CD8-positive, alpha-beta T cell (primary cell): ENCODE measurements at regions of chr11 and their contacts with region 1.

Region 1: DNA sequence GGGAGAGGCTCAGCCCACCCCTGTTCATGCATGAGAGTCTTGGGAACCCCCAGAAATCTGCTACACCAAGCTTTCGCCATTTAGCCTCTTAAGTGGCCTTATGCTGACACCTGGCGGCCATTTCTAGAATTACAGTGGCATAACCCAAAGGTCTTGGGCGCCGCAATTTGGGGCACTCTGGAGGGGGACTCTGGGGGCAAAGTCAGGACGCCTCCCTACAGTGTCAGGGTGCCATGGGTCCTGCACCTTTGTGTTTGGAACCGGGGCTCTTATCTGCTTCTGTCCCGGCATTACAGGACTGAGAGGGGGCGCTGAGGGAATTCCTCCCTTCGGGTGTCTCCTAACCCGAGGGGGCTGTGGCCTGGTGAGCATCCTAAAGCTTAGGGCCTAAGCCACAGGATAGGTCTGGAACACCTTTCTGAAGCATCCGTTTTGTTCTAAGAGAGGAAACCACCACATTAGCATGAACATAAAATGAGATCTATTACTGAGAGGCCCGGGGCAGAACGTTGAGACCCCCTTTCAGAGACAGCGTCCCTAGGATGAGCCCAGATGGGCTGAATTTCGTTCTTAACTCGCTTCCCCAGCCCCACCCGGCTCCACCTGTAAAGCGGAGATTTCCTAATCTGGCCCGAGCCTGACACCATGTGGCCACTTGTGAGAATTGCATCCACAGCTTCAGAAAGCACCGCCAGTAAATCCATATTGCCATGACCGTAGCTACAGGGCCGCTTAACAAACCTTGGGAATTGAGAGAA is 9.3 kb downstream of the INS start:
- DNase-seq: peak; percentile 68 to 88 (median 82)
- ATAC-seq: peak; percentile 90
- H3K4me3 ChIP-seq: peak overlapping the region; percentile 14 to 18
- H3K4me3 Mint-ChIP-seq: peak overlapping the region; percentile 56
- H3K27ac ChIP-seq: peak overlapping the region in 1 of 2 experiments; percentile 45
- H3K27ac Mint-ChIP-seq: no peak overlapping the region
- H3K4me1 ChIP-seq: peaks cover 6% of the 10 kb centered on the region
- H3K4me1 Mint-ChIP-seq: peaks cover 6% of the 10 kb centered on the region
- H3K27me3 ChIP-seq: peaks cover 4 to 5% of the 10 kb centered on the region in 2 experiments
- H3K27me3 Mint-ChIP-seq: peaks cover 30% of the 10 kb centered on the region
- CTCF ChIP-seq: peak; percentile 74

Region 2: GRCh38 chr11:1837171-1838076 is 314.3 kb before region 1 on chr11:
- CTCF ChIA-PET with region 1: interaction called, 60 read pairs
- POLR2A ChIA-PET with region 1: interaction called, 4 read pairs
- intact Hi-C with region 1: loop called in 1 of 2 experiments (anchors 1 kb)
- DNase-seq: peak; percentile 73 to 94 (median 88)
- ATAC-seq: peak; percentile 98
- H3K4me3 ChIP-seq: no peak overlapping the region
- H3K4me3 Mint-ChIP-seq: no peak overlapping the region
- H3K27ac ChIP-seq: no peak overlapping the region
- H3K27ac Mint-ChIP-seq: no peak overlapping the region
- H3K4me1 ChIP-seq: peaks cover 25% of the 10 kb centered on the region
- H3K4me1 Mint-ChIP-seq: peaks cover 10% of the 10 kb centered on the region
- H3K27me3 ChIP-seq: peaks cover 0 to 6% of the 10 kb centered on the region in 2 experiments
- H3K27me3 Mint-ChIP-seq: no peaks in the 10 kb centered on the region
- CTCF ChIP-seq: peak; percentile 84

Region 3: DNA sequence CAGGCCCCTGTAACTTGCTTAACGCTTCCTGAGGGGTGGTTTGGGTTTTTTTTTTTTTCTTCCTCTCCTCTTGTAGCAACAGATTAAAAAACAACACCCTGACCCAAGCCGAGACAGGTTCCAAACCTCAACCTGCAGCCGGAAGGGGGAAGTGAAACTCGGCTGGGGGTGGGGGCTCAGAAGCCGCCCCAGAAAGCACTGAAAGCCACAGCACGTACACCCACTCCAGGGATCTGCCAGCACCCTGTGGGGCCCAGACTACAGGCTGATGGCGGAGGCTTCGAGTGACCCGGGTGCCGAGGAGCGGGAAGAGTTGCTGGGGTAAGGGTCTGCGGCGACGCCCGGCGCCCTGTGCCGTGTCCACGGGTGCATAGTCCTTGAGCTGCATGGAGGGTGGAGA is 298.8 kb before region 1 on chr11 and contains the start of gene LSP1:
- CTCF ChIA-PET with region 1: interaction called, 16 read pairs
- POLR2A ChIA-PET with region 1: no interaction called
- intact Hi-C with region 1: loop called in 1 of 2 experiments (anchors 5 kb)
- DNase-seq: peak; percentile 64 to 96 (median 86)
- ATAC-seq: peak; percentile 65
- H3K4me3 ChIP-seq: peak within 1 kb of the TSS; percentile 81 to 100
- H3K4me3 Mint-ChIP-seq: peak within 1 kb of the TSS; percentile 94
- H3K27ac ChIP-seq: peak within 1 kb of the TSS; percentile 90 to 91
- H3K27ac Mint-ChIP-seq: peak within 1 kb of the TSS; percentile 92
- H3K4me1 ChIP-seq: peaks cover 81% of the 10 kb centered on the region
- H3K4me1 Mint-ChIP-seq: peaks cover 67% of the 10 kb centered on the region
- H3K27me3 ChIP-seq: no peaks in the 10 kb centered on the region
- H3K27me3 Mint-ChIP-seq: no peaks in the 10 kb centered on the region
- CTCF ChIP-seq: no peak
- total RNA-seq, gene LSP1: 190 to 191 TPM

Region 4: GRCh38 chr11:1917671-1918516 is 233.8 kb before region 1 on chr11:
- CTCF ChIA-PET with region 1: interaction called, 3 read pairs
- POLR2A ChIA-PET with region 1: no interaction called
- intact Hi-C with region 1: loop called in 1 of 2 experiments (anchors 10 kb)
- DNase-seq: peak in 2 of 9 experiments; percentile 31 to 44
- ATAC-seq: peak; percentile 54
- H3K4me3 ChIP-seq: no peak overlapping the region
- H3K4me3 Mint-ChIP-seq: no peak overlapping the region
- H3K27ac ChIP-seq: no peak overlapping the region
- H3K27ac Mint-ChIP-seq: no peak overlapping the region
- H3K4me1 ChIP-seq: peaks cover 11% of the 10 kb centered on the region
- H3K4me1 Mint-ChIP-seq: peaks cover 26% of the 10 kb centered on the region
- H3K27me3 ChIP-seq: peaks cover 0 to 2% of the 10 kb centered on the region in 2 experiments
- H3K27me3 Mint-ChIP-seq: peaks cover 11% of the 10 kb centered on the region
- CTCF ChIP-seq: peak; percentile 29

Region 5: DNA sequence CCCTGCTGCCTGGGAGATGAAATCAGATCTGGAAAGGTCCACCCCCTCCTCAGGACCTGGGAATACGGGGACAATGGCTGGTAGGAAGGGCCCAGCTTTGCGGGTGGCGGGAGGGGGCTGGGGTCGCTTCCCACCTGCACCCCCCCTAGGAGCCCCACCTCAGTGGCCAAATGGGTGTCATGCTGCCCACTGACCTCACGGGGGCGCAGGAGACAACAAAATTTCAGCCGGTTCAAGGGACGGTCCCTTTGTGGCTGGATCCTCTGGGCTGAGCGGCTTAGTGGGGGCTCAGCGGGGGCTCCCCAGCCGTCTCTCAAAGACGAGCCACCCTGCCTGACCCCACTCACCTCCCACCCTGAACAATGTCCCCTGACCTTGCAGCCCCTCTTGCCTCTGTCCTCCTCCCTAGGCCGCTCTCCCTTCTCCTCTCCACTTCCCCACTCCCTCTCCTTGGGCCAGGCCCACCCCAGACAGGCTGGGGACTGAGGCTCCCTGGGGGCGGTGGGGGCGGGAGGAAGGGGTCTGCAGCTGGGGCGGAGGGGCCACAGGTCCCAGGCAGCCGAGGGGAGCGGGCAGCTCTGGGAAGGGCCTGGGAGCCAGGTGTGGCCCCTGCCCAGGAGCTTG is 114.7 kb before region 1 on chr11:
- CTCF ChIA-PET with region 1: interaction called, 343 read pairs
- POLR2A ChIA-PET with region 1: interaction called, 4 read pairs
- intact Hi-C with region 1: no loop called
- DNase-seq: no peak
- ATAC-seq: peak; percentile 54
- H3K4me3 ChIP-seq: no peak overlapping the region
- H3K4me3 Mint-ChIP-seq: no peak overlapping the region
- H3K27ac ChIP-seq: no peak overlapping the region
- H3K27ac Mint-ChIP-seq: no peak overlapping the region
- H3K4me1 ChIP-seq: no peaks in the 10 kb centered on the region
- H3K4me1 Mint-ChIP-seq: no peaks in the 10 kb centered on the region
- H3K27me3 ChIP-seq: no peaks in the 10 kb centered on the region
- H3K27me3 Mint-ChIP-seq: no peaks in the 10 kb centered on the region
- CTCF ChIP-seq: no peak

Region 6: DNA sequence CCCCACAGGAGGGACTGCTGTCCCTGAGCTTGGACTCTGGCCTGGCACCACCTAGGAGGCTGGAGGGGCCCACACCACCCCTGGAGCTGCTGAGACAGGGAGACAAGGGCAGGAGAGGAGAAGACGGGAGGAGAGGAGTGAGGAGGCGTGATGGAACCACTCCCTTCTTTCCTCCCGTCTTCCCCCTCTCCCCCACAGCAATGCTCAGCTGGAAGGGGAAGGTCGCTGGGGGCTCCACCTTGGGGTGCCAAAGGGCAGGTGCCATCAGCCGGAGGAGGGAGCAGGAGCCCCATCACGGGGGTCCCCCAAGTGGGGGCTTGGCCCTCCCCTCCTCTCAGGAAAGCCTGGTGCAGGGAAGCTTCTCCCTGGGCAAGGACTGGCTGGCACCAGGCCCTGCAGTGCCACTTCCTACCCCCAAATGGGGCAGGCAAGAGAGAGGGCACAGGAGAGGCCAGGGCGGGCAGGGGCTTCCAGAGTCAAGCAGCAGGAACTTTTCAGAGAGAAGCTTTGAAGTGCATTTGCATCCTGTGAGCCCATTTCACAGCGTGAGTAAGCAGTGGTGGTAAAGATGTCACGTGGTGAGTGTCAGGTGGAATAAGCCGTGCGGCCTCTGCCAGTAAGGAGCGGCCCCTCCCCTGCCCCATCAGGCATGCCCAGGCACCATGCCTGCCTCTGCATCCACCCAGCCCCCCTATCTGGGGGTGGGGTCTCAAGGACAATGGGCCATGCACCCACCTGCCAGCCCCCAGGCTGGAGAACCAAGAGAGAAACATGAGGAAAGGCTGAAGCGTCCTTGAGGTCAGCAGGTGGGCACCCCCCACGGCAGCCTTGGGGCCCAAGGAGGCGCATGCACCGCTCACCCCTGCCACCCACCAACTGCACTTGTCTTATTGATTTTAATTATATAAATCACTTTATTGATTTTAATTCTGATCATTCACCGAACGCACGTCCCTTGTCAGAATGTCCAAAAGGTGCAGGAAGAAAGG is 17.4 kb before region 1 on chr11:
- CTCF ChIA-PET with region 1: interaction called, 12 read pairs
- POLR2A ChIA-PET with region 1: no interaction called
- intact Hi-C with region 1: no loop called
- DNase-seq: no peak
- ATAC-seq: no peak
- H3K4me3 ChIP-seq: no peak overlapping the region
- H3K4me3 Mint-ChIP-seq: no peak overlapping the region
- H3K27ac ChIP-seq: no peak overlapping the region
- H3K27ac Mint-ChIP-seq: no peak overlapping the region
- H3K4me1 ChIP-seq: peaks cover 4% of the 10 kb centered on the region
- H3K4me1 Mint-ChIP-seq: peaks cover 3% of the 10 kb centered on the region
- H3K27me3 ChIP-seq: peaks cover 21 to 24% of the 10 kb centered on the region in 2 experiments
- H3K27me3 Mint-ChIP-seq: peaks cover 30% of the 10 kb centered on the region
- CTCF ChIP-seq: no peak

Region 7: GRCh38 chr11:2234963-2235362 is 83.3 kb after region 1 on chr11:
- CTCF ChIA-PET with region 1: no interaction called
- POLR2A ChIA-PET with region 1: no interaction called
- intact Hi-C with region 1: no loop called
- DNase-seq: no peak
- ATAC-seq: no peak
- H3K4me3 ChIP-seq: no peak overlapping the region
- H3K4me3 Mint-ChIP-seq: no peak overlapping the region
- H3K27ac ChIP-seq: no peak overlapping the region
- H3K27ac Mint-ChIP-seq: no peak overlapping the region
- H3K4me1 ChIP-seq: no peaks in the 10 kb centered on the region
- H3K4me1 Mint-ChIP-seq: no peaks in the 10 kb centered on the region
- H3K27me3 ChIP-seq: no peaks in the 10 kb centered on the region
- H3K27me3 Mint-ChIP-seq: peaks cover 7% of the 10 kb centered on the region
- CTCF ChIP-seq: no peak

Region 8: DNA sequence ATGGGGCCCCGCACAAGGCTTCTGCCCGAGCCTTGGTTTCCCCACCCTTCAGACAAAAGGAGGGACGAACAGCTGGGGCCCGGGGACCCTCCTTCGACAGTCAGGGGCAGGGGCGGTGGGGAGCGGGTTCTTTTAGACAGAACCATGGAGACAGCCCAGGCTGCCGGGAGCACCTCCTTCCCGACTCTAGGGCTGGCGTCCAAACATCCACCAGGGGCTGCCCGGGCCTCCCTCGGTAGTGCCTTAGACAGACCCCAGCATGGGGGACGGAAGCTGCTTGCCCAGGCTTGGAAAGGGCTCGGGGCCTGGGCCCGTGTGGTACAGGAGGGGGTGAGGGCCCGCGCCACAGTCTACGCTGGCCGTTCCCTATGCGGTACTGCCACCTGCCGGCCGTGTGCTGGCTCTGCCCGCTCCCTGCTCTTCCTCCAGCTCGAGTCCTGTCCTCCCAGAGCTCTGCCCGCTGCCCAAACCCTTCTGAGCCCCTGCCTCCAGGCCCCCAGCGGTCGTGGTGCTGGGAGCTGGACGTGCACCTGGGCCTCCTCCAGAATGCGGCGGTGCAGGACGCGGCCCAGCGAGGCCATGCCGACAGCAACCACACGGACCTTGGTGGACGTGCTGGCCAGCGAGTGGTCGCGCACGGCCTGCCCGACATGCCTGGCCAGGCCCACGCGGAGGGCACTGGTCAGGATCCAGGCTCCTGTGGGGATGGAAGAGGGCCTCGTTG is 269.0 kb after region 1 on chr11:
- CTCF ChIA-PET with region 1: interaction called, 11 read pairs
- POLR2A ChIA-PET with region 1: no interaction called
- intact Hi-C with region 1: no loop called
- DNase-seq: peak; percentile 52 to 86 (median 69)
- ATAC-seq: peak; percentile 94
- H3K4me3 ChIP-seq: no peak overlapping the region
- H3K4me3 Mint-ChIP-seq: no peak overlapping the region
- H3K27ac ChIP-seq: no peak overlapping the region
- H3K27ac Mint-ChIP-seq: no peak overlapping the region
- H3K4me1 ChIP-seq: peaks cover 14% of the 10 kb centered on the region
- H3K4me1 Mint-ChIP-seq: peaks cover 4% of the 10 kb centered on the region
- H3K27me3 ChIP-seq: peaks cover 0 to 3% of the 10 kb centered on the region in 2 experiments
- H3K27me3 Mint-ChIP-seq: no peaks in the 10 kb centered on the region
- CTCF ChIP-seq: peak; percentile 83